Thyroid gland (tissue), 4 donors: ENCODE measurements at regions of chr19 and their contacts with region 1.

Region 1: GRCh38 chr19:2900296-2901252 is at the start of gene ZNF57:
- DNase-seq: peak; percentile 100
- H3K4me3 ChIP-seq: peak within 1 kb of the TSS; percentile 54 to 84 (median 70)
- H3K27ac ChIP-seq: peak within 1 kb of the TSS; percentile 84 to 89 (median 85)
- H3K4me1 ChIP-seq: peaks cover 0 to 6% of the 10 kb centered on the region in 2 donors
- H3K27me3 ChIP-seq: no peaks in the 10 kb centered on the region
- CTCF ChIP-seq: no peak
- POLR2A ChIP-seq: peak in 1 of 2 donors; percentile 55
- total RNA-seq, gene ZNF57: 3.1 to 4.8 (median 3.6) TPM

Region 2: DNA sequence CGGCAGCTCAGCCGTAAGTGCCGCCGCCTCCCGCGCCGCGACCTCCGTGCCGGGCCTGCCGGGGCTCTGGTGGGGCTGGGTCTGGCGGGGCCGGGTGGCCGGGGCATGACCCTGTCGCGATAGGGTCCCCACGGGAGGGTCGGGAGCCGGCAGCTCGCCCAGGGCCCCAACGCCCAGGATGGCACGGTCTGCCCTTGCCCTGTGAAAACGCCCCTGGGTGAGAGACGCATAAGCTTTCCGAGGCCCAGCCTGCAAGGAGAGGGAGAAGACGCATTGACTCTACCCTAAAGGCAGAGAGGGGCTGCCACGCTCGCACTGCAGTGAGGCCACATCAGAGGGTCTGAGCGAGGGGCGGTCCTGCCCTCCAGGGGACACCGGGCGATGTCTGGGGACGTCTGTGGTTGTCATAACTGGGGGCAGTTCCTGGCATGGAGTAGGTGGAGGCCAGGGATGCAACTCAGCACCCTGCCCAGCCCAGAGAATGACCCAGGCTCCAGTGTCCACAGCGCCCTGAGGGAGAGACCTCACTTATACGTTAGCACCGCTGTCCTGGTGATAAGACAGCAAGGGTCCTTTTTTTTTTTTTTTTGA is 80.4 kb before region 1 on chr19:
- intact Hi-C with region 1: no loop called
- DNase-seq: peak in 1 of 2 donors; percentile 19
- H3K4me3 ChIP-seq: peak overlapping the region; percentile 75 to 95 (median 83)
- H3K27ac ChIP-seq: peak overlapping the region in 1 of 3 donors; percentile 27
- H3K4me1 ChIP-seq: peaks cover 6% of the 10 kb centered on the region in 2 donors
- H3K27me3 ChIP-seq: no peaks in the 10 kb centered on the region
- CTCF ChIP-seq: no peak
- POLR2A ChIP-seq: no peak

Region 3: GRCh38 chr19:2944775-2945574 is 44.4 kb after region 1 on chr19 and contains the start of gene ZNF77:
- intact Hi-C with region 1: loop called (anchors 5 kb)
- DNase-seq: peak; percentile 100
- H3K4me3 ChIP-seq: peak within 1 kb of the TSS; percentile 82 to 97 (median 91)
- H3K27ac ChIP-seq: peak within 1 kb of the TSS; percentile 85 to 90 (median 85)
- H3K4me1 ChIP-seq: peaks cover 16 to 17% of the 10 kb centered on the region in 2 donors
- H3K27me3 ChIP-seq: no peaks in the 10 kb centered on the region
- CTCF ChIP-seq: peak in 3 of 6 experiments; percentile 19 to 31 (median 21)
- POLR2A ChIP-seq: peak in 1 of 2 donors; percentile 76
- total RNA-seq, gene ZNF77: 5.1 to 7.0 (median 6.2) TPM